Dendritic cell treated with granulocyte-macrophage colony-stimulating factor and Interleukin-4, amounts not matched to agents 40 ng/mL and 50 ng/mL, for 4 days (primary cell): ENCODE measurements at regions of chr20 and their contacts with region 1.

Region 1: DNA sequence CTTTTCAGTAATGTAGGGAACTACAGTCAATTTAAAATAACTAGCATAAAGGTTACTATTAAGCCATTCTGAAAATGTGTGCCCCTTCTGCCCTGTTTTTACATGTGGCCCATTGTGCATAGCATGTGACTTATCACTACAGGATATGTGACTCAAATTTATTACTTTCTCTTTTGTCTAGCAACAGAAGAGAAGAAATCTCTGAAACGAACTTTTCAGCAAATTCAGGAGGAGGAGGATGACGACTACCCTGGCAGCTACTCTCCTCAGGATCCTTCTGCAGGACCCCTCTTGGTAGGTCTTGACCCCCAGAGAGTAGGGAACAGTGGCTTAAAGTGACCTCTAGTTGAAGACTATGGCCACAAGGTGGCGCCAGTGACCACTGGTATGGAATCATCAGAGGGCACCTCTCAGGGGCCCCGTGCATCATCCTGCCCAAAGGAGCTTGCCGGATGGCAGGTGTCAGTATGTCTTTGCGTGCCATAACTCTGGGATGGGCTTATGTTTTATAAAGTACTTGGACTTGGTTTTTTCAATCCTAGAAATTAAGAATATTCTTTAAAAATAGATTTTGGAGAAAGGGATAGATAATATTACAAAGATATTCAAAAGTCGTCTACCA is 23.9 kb downstream of the RPRD1B start:
- H3K4me3 Mint-ChIP-seq: no peak overlapping the region
- H3K27ac Mint-ChIP-seq: no peak overlapping the region
- H3K4me1 Mint-ChIP-seq: no peaks in the 10 kb centered on the region
- H3K27me3 Mint-ChIP-seq: no peaks in the 10 kb centered on the region

Region 2: DNA sequence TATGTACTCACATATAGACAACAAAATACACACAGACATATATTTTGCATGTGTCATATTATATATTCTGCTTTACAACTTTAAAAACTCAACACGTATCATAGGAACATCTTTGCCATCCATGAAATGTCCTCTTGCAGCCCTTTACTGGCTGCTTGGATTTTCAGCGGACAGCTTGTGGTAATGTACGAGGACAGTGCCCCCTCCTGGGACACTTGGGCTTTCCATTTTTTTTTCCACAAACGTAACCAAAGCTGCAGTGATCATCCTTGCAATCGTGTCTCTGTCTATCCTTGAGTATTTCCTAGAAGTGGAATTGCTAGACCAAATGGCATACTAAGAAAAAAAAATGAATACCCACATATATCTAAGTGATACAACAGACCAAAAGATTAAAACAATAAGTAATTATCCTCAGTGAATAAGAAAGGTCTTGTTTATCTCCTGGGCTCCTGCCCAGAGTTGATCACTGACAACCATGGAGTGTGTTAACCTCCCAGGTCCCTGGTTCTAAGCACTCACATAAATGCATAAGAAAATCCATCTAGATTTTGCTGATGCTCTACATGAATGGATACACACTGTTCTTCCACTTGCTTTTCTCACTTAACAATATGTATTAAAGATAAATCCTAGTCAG is 264.6 kb after region 1 on chr20:
- intact Hi-C with region 1: loop called (anchors 1 kb)
- H3K4me3 Mint-ChIP-seq: no peak overlapping the region
- H3K27ac Mint-ChIP-seq: no peak overlapping the region
- H3K4me1 Mint-ChIP-seq: peaks cover 17% of the 10 kb centered on the region
- H3K27me3 Mint-ChIP-seq: peaks cover 25% of the 10 kb centered on the region